ENCODE measurements at regions of chr6 and their contacts with region 1.

Region 1: DNA sequence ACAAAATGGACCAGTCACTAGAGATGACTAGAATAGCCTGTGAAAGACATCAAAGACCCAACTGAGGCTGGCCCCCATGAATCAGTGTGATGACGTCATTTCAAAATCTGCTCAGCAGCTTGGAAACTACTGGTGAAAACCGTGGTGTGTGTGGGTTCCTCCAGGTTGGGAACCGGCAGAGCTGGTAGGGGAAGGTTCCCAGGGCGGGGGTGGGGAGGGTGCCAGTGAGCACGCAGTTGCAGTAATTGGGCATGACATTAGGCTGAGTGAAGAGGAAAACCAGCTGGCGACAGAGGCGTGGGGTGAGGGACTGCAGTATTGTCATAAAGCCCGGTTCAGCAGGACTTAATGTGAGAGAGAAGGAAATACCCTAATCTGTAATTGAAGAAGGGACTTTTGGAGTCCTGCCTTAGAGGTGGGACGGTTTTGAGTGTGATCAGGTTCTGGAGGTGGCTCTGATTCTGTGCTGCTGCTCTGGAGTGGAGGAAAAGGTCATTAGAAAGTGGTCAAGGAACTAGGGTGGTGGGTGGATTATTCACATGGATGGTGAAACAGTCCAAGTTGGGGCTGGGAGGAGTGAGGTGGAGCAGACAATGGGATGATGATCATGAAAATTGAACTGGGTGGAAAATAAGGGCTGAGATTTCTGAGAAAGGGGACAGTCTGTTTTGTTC is 52.0 kb upstream of the MTHFD1L start:
- DNase-seq: peak; percentile 53
- ATAC-seq: peak; percentile 37
- H3K4me3 Mint-ChIP-seq: no peak overlapping the region
- H3K27ac Mint-ChIP-seq: peak overlapping the region; percentile 43
- H3K4me1 Mint-ChIP-seq: peaks cover 23% of the 10 kb centered on the region
- H3K27me3 Mint-ChIP-seq: no peaks in the 10 kb centered on the region

Region 2: GRCh38 chr6:150395398-150396009 is 418.0 kb before region 1 on chr6:
- CTCF ChIA-PET with region 1: interaction called, 24 read pairs
- DNase-seq: peak; percentile 50
- ATAC-seq: peak; percentile 71
- H3K4me3 Mint-ChIP-seq: no peak overlapping the region
- H3K27ac Mint-ChIP-seq: no peak overlapping the region
- H3K4me1 Mint-ChIP-seq: no peaks in the 10 kb centered on the region
- H3K27me3 Mint-ChIP-seq: peaks cover 32% of the 10 kb centered on the region

Region 3: GRCh38 chr6:150417899-150418826 is 395.3 kb before region 1 on chr6:
- CTCF ChIA-PET with region 1: interaction called, 95 read pairs
- DNase-seq: peak; percentile 63
- ATAC-seq: peak; percentile 76
- H3K4me3 Mint-ChIP-seq: peak overlapping the region; percentile 68
- H3K27ac Mint-ChIP-seq: peak overlapping the region; percentile 77
- H3K4me1 Mint-ChIP-seq: peaks cover 29% of the 10 kb centered on the region
- H3K27me3 Mint-ChIP-seq: peaks cover 26% of the 10 kb centered on the region

Region 4: GRCh38 chr6:150600301-150601017 is 213.0 kb before region 1 on chr6:
- CTCF ChIA-PET with region 1: interaction called, 12 read pairs
- DNase-seq: peak; percentile 81
- ATAC-seq: peak; percentile 77
- H3K4me3 Mint-ChIP-seq: peak overlapping the region; percentile 81
- H3K27ac Mint-ChIP-seq: peak overlapping the region; percentile 77
- H3K4me1 Mint-ChIP-seq: peaks cover 15% of the 10 kb centered on the region
- H3K27me3 Mint-ChIP-seq: peaks cover 58% of the 10 kb centered on the region

Region 5: DNA sequence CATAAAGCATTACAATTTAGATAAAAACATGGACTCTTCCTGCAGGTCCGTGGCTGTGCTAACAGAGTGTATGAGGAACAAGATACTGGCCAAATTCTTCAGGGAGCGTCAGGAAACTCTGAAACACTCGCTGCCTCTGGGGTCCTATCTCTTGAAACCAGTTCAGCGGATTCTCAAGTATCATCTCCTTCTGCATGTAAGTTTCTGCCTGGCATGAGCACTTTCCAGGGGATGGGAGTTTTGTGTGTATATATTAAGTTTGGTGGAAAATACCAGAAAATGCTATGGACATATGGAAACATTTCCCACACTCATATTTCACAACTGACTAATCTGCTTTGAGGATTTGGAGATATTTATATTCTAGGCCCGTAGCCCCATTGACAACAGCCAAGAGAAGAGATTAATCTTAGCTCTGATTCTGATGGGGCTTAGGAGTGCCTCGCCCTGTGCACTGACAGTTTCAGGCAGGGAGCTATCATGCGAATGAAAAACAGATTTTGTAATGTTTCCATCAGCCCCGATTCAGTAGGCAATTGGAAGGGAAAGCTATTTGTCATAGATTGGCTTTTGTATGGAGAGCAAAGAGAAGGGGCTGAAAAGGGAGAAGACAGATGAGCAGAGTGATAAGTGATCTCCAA is 12.7 kb before region 1 on chr6:
- CTCF ChIA-PET with region 1: interaction called, 17 read pairs
- DNase-seq: no peak
- ATAC-seq: no peak
- H3K4me3 Mint-ChIP-seq: no peak overlapping the region
- H3K27ac Mint-ChIP-seq: no peak overlapping the region
- H3K4me1 Mint-ChIP-seq: no peaks in the 10 kb centered on the region
- H3K27me3 Mint-ChIP-seq: no peaks in the 10 kb centered on the region

Region 6: DNA sequence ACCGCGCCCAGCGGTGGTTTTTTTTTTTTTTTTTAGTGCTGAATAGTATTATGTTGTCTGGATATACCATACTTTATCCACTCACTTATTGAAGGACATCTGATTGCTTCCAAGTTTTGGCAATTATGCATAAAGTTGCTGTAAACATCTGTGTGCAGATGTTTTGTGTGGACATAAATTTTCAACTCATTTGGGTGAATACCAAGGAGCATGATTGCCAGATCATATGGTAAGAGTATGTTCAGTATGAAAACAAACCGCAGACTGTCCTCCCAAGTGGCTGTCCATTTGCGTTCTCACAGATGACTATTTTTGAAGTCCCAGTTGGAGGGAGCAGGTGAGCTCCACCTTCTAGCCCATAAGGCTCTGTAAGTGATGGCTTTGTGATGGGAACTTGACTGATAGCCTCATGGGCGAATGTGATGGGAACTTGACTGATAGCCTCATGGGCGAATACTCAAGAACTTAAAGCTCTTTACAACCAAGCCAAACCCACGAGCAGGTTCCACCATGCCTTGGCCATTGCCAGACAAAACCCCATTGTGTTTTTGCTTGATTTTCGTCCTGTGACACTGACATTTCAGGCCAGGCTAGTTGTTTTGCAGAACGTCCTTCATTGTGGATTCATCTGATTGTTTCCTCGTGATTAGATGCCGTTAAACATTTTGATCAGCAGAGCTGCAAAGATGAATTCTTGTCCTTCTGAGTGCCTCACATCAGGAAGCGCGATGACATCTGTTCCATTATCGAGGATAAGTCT is 526.9 kb after region 1 on chr6:
- CTCF ChIA-PET with region 1: interaction called, 11 read pairs
- DNase-seq: no peak
- ATAC-seq: no peak
- H3K4me3 Mint-ChIP-seq: no peak overlapping the region
- H3K27ac Mint-ChIP-seq: no peak overlapping the region
- H3K4me1 Mint-ChIP-seq: no peaks in the 10 kb centered on the region
- H3K27me3 Mint-ChIP-seq: peaks cover 12% of the 10 kb centered on the region